ENCODE measurements at regions of chr9 and their contacts with region 1.

Region 1: DNA sequence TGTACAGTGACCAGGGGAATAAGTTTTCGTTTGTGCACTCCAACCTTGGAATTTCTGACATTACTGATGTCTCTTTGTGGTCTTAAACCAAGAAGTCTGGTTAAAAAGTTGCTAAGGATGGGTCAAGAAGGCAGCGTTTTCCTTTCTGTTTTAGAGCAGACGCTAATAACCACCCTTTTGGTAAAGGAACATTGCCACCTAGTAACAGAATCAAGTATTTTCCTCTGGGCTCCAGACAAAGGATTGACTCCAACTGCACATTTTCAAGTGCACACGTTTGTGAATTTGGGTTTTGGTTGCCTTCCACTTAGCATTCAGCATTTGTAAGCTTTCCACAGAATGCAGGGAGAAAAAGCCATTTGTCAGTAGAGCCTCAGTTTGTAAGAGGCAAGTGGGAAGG is 22.2 kb upstream of the CEP78 start:
- DNase-seq: peak in 6 of 9 donors; percentile 12 to 54 (median 40)
- ATAC-seq: peak; percentile 65
- H3K4me3 ChIP-seq: no peak overlapping the region
- H3K4me3 Mint-ChIP-seq: peak overlapping the region in 3 of 10 donors; percentile 16 to 61 (median 46)
- H3K27ac ChIP-seq: no peak overlapping the region
- H3K27ac Mint-ChIP-seq: peak overlapping the region in 4 of 9 donors; percentile 30 to 89 (median 74)
- H3K4me1 ChIP-seq: peaks cover 34 to 38% of the 10 kb centered on the region in 2 donors
- H3K4me1 Mint-ChIP-seq: peaks cover 17 to 51% (median 44%) of the 10 kb centered on the region in 7 donors
- H3K27me3 ChIP-seq: no peaks in the 10 kb centered on the region
- H3K27me3 Mint-ChIP-seq: peaks cover 0 to under 1% (median 0%) of the 10 kb centered on the region in 5 donors

Region 2: GRCh38 chr9:77177161-77177893 is 1036.4 kb before region 1 on chr9 and contains the start of gene VPS13A:
- CTCF ChIA-PET with region 1: no interaction called
- POLR2A ChIA-PET with region 1: no interaction called
- intact Hi-C with region 1: loop called in 1 of 2 experiments (anchors 5 kb)
- DNase-seq: peak; percentile 78 to 92 (median 87)
- ATAC-seq: peak; percentile 92
- H3K4me3 ChIP-seq: peak within 1 kb of the TSS; percentile 89
- H3K4me3 Mint-ChIP-seq: peak within 1 kb of the TSS; percentile 90 to 98 (median 96)
- H3K27ac ChIP-seq: peak within 1 kb of the TSS; percentile 86
- H3K27ac Mint-ChIP-seq: peak within 1 kb of the TSS; percentile 76 to 96 (median 90)
- H3K4me1 ChIP-seq: peaks cover 5 to 17% of the 10 kb centered on the region in 2 donors
- H3K4me1 Mint-ChIP-seq: peaks cover 12 to 39% (median 30%) of the 10 kb centered on the region in 7 donors
- H3K27me3 ChIP-seq: no peaks in the 10 kb centered on the region
- H3K27me3 Mint-ChIP-seq: peaks cover 0 to 20% (median 0%) of the 10 kb centered on the region in 5 donors
- total RNA-seq, gene VPS13A: 37.1 to 52.8 (median 42.6) TPM

Region 3: DNA sequence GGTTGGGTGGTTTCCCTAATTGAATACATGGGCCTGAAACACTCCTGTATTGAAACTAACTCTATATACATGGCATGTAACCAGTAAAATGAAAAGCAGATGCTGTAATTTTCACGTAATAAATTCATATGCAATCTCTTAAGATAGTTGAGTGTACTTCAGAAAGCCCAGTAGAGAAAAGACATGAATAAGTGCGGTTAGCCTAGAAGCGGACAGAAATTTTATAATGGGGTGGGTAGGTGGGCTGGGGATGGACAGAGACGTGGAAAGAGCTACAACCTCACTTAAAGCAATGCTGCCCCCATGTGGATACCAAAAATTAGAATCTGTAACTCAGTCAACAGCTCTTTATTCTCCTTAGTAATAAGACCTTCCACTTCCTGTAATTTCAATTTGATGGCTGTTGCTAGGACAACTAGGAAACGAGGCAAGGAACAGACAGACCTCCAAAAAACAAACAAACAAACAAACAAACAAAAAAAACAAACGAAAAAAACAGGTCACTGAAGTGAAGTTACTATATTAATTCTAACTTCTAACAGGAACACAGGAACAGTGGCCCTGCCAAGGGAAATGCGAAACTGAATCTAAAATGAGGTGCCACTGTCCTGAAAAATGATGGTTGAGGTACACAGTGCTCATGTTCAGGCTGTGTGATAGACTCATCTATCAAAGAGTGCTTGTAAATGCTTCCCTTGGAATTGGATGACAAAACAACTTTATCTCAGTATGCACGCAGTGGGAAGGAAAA is 462.2 kb before region 1 on chr9:
- CTCF ChIA-PET with region 1: no interaction called
- POLR2A ChIA-PET with region 1: no interaction called
- intact Hi-C with region 1: loop called in 1 of 2 experiments (anchors 10 kb)
- DNase-seq: peak in 6 of 9 donors; percentile 4 to 28 (median 22)
- ATAC-seq: peak; percentile 57
- H3K4me3 ChIP-seq: no peak overlapping the region
- H3K4me3 Mint-ChIP-seq: no peak overlapping the region
- H3K27ac ChIP-seq: no peak overlapping the region
- H3K27ac Mint-ChIP-seq: peak overlapping the region in 5 of 9 donors; percentile 4 to 86 (median 29)
- H3K4me1 ChIP-seq: no peaks in the 10 kb centered on the region
- H3K4me1 Mint-ChIP-seq: peaks cover 15 to 34% (median 28%) of the 10 kb centered on the region in 7 donors
- H3K27me3 ChIP-seq: no peaks in the 10 kb centered on the region
- H3K27me3 Mint-ChIP-seq: no peaks in the 10 kb centered on the region

Region 4: GRCh38 chr9:77909306-77909705 is 304.4 kb before region 1 on chr9:
- CTCF ChIA-PET with region 1: no interaction called
- POLR2A ChIA-PET with region 1: no interaction called
- intact Hi-C with region 1: loop called (anchors 5 to 10 kb)
- DNase-seq: peak in 7 of 9 donors; percentile 45 to 80 (median 63)
- ATAC-seq: peak; percentile 98
- H3K4me3 ChIP-seq: peak overlapping the region; percentile 27
- H3K4me3 Mint-ChIP-seq: peak overlapping the region; percentile 58 to 87 (median 78)
- H3K27ac ChIP-seq: peak overlapping the region; percentile 65
- H3K27ac Mint-ChIP-seq: peak overlapping the region; percentile 68 to 97 (median 92)
- H3K4me1 ChIP-seq: peaks cover 6 to 32% of the 10 kb centered on the region in 2 donors
- H3K4me1 Mint-ChIP-seq: peaks cover 45 to 70% (median 61%) of the 10 kb centered on the region in 7 donors
- H3K27me3 ChIP-seq: no peaks in the 10 kb centered on the region
- H3K27me3 Mint-ChIP-seq: no peaks in the 10 kb centered on the region

Region 5: GRCh38 chr9:78074385-78075291 is 139.1 kb before region 1 on chr9:
- CTCF ChIA-PET with region 1: interaction called, 3 read pairs
- POLR2A ChIA-PET with region 1: no interaction called
- intact Hi-C with region 1: loop called in 1 of 2 experiments (anchors 2 kb)
- DNase-seq: peak in 7 of 9 donors; percentile 10 to 54 (median 44)
- ATAC-seq: peak; percentile 67
- H3K4me3 ChIP-seq: peak overlapping the region; percentile 25
- H3K4me3 Mint-ChIP-seq: peak overlapping the region; percentile 64 to 84 (median 76)
- H3K27ac ChIP-seq: peak overlapping the region; percentile 57
- H3K27ac Mint-ChIP-seq: peak overlapping the region; percentile 60 to 94 (median 85)
- H3K4me1 ChIP-seq: peaks cover 19 to 24% of the 10 kb centered on the region in 2 donors
- H3K4me1 Mint-ChIP-seq: peaks cover 38 to 60% (median 58%) of the 10 kb centered on the region in 7 donors
- H3K27me3 ChIP-seq: no peaks in the 10 kb centered on the region
- H3K27me3 Mint-ChIP-seq: peaks cover 0 to 5% (median 0%) of the 10 kb centered on the region in 5 donors

Region 6: DNA sequence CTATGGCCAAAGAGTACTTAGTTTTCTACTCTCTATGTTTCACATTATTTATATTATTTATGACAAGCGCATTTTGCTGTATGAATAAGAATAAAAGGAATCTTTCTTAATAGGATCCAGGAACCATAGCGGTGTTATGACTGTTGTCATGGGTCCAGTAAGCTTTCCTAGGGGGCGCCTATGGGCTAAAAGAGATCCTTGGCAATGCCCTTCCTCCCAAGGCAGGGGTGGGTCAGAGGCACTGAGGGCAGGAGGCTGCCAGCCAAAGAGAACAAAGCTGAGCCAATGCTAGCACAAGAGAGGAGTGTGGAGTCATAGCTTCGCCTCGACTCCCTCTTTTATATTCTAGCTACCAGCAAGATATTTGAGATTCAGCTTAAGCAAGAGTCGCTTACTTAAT is 83.7 kb before region 1 on chr9:
- CTCF ChIA-PET with region 1: no interaction called
- POLR2A ChIA-PET with region 1: interaction called, 3 read pairs
- intact Hi-C with region 1: loop called in 1 of 2 experiments (anchors 5 kb)
- DNase-seq: no peak
- ATAC-seq: no peak
- H3K4me3 ChIP-seq: no peak overlapping the region
- H3K4me3 Mint-ChIP-seq: no peak overlapping the region
- H3K27ac ChIP-seq: no peak overlapping the region
- H3K27ac Mint-ChIP-seq: no peak overlapping the region
- H3K4me1 ChIP-seq: peaks cover 6 to 11% of the 10 kb centered on the region in 2 donors
- H3K4me1 Mint-ChIP-seq: peaks cover 9 to 22% (median 17%) of the 10 kb centered on the region in 7 donors
- H3K27me3 ChIP-seq: no peaks in the 10 kb centered on the region
- H3K27me3 Mint-ChIP-seq: peaks cover 0 to 17% (median 0%) of the 10 kb centered on the region in 5 donors

Region 7: DNA sequence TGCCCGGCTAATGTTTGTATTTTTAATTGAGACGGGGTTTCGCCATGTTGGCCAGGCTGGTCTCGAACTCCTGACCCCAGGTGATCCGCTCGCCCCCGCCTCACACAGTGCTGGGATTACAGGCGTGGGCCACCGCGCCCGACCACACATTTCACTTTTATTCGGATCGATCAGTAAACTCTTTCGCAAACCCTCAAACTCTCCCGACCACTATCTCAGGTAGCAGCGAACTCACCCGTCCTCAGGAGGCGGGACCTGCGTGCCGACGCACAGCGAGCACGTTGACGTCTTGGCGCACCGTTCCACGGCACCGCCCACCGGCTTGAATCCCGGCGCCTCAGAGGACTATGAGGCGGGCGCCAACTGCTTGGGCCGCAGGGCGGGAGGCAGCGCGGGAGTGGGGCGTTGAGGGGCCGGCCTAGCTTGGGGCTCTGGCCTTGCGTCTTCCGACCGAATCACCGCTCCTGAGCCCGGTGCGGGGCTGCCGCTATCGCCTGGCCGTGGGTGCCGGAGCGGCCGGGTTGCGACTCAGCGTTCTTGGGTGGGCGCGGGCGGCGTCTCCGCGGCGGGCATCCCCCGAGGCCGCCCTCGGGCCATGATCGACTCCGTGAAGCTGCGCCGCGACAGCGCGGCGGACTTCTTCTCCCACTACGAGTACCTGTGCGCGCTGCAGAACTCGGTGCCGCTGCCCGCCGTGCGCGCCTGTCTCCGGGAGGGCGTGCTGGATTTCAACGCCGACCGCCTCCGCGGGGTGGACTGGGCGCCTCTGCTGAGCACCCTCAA is 22.2 kb after region 1 on chr9 and contains the start of gene CEP78:
- CTCF ChIA-PET with region 1: no interaction called
- POLR2A ChIA-PET with region 1: interaction called, 5 read pairs
- intact Hi-C with region 1: loop called (anchors 1 to 2 kb)
- DNase-seq: peak; percentile 67 to 88 (median 81)
- ATAC-seq: peak; percentile 96
- H3K4me3 ChIP-seq: peak within 1 kb of the TSS; percentile 86
- H3K4me3 Mint-ChIP-seq: peak within 1 kb of the TSS in 4 of 10 donors; percentile 74 to 98 (median 98)
- H3K27ac ChIP-seq: peak within 1 kb of the TSS; percentile 72
- H3K27ac Mint-ChIP-seq: peak within 1 kb of the TSS; percentile 91 to 98 (median 95)
- H3K4me1 ChIP-seq: peaks cover 5 to 12% of the 10 kb centered on the region in 2 donors
- H3K4me1 Mint-ChIP-seq: peaks cover 28 to 46% (median 40%) of the 10 kb centered on the region in 7 donors
- H3K27me3 ChIP-seq: no peaks in the 10 kb centered on the region
- H3K27me3 Mint-ChIP-seq: peaks cover 0 to 3% (median 0%) of the 10 kb centered on the region in 5 donors
- total RNA-seq, gene CEP78: 14.7 to 34.8 (median 23.1) TPM